Breast epithelium (tissue), 4 donors: ENCODE measurements at regions of chr3 and their contacts with region 1.

Region 1: GRCh38 chr3:16550676-16551341 is 37.3 kb upstream of the RFTN1 start:
- DNase-seq: peak in 1 of 2 donors; percentile 49
- H3K4me3 ChIP-seq: peak overlapping the region in 2 of 3 donors; percentile 11 to 45
- H3K27ac ChIP-seq: no peak overlapping the region
- H3K4me1 ChIP-seq: no peaks in the 10 kb centered on the region
- H3K27me3 ChIP-seq: no peaks in the 10 kb centered on the region
- CTCF ChIP-seq: peak; percentile 79 to 87 (median 81)
- POLR2A ChIP-seq: no peak

Region 2: DNA sequence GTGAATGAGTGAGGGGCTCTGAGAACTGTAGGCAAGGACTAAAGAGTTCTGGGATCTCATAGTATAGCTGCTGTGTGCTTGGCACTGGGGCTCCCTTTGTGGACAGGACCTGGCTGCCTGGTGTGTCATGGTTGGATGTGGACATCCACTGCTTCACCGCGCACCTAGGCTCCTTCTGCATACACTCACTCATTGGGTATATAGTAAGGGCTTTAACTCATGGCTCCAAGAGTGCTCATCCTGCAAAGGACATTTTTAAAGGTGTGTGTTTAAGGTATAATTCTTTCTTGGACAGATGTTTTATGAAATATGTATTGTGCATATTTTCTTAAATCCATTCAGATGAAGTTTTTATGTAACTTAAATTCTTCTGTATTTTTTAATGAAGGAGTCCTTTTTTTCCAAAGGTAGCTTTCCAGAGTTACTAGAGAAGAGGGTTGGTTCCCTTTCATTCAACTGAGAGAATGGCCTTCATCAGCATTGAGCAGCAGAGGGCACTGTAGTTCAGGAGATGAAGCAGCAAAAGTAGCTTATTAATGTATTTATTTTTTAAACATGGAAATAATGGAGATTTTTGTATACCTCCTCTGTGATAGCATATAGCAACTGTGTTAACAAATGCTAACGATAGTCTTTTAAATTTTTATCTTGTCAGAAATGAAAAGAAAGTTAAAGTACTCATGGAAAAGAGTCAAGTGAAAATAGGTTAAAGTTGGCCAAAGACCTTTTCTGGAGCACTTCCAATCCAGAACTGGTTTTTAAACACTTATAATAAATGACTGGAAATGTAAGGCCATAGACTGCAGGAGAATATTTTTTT is 260.6 kb before region 1 on chr3:
- intact Hi-C with region 1: loop called (anchors 10 kb)
- DNase-seq: no peak
- H3K4me3 ChIP-seq: no peak overlapping the region
- H3K27ac ChIP-seq: no peak overlapping the region
- H3K4me1 ChIP-seq: no peaks in the 10 kb centered on the region
- H3K27me3 ChIP-seq: no peaks in the 10 kb centered on the region
- CTCF ChIP-seq: peak in 2 of 3 donors; percentile 62 to 80
- POLR2A ChIP-seq: no peak

Region 3: DNA sequence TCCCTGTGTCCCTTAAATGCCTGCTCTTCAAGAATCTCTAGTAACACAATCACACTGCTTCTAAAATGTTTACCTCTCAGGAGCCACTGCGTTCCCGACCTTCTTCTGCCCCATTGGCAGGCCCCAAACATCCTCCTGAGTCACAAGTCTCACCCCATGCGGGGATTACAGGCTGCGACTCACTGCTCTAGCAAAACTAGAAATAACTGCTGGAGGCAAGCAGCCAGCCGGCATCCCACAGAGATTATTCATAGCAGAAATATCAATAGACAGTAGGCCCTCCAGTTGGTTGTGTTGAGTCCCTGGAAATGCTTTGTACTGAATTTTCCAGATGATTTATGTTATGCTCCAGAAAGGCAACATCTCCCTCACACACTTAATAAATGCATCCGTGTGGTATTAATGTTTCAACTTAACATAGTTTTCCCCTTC is 102.2 kb before region 1 on chr3:
- intact Hi-C with region 1: no loop called
- DNase-seq: peak in 1 of 2 donors; percentile 21
- H3K4me3 ChIP-seq: no peak overlapping the region
- H3K27ac ChIP-seq: peak overlapping the region in 1 of 2 donors; percentile 55
- H3K4me1 ChIP-seq: no peaks in the 10 kb centered on the region
- H3K27me3 ChIP-seq: no peaks in the 10 kb centered on the region
- CTCF ChIP-seq: no peak
- POLR2A ChIP-seq: no peak

Region 4: DNA sequence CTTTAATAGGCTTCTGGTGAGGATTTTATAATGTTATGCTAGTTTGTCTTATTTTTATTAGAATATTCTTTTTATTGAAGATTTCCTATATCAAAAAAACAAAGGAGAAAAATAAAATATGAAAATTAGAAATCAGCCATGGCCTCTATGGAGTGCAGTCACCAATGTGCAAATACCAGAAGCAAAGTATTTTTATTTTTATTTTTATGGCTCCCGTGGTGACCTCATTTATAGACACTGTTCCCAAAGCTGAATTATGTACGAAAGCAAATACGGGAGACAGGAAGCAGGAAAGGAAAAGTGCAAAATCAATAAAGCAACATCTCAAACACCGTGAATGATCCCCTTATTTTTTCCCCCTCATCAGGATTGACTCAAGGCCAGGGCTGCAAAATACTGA is 19.3 kb after region 1 on chr3:
- intact Hi-C with region 1: no loop called
- DNase-seq: no peak
- H3K4me3 ChIP-seq: no peak overlapping the region
- H3K27ac ChIP-seq: no peak overlapping the region
- H3K4me1 ChIP-seq: no peaks in the 10 kb centered on the region
- H3K27me3 ChIP-seq: no peaks in the 10 kb centered on the region
- CTCF ChIP-seq: no peak
- POLR2A ChIP-seq: no peak